HEK293 (cell line): ENCODE measurements at regions of chr12 and their contacts with region 1.

Region 1: DNA sequence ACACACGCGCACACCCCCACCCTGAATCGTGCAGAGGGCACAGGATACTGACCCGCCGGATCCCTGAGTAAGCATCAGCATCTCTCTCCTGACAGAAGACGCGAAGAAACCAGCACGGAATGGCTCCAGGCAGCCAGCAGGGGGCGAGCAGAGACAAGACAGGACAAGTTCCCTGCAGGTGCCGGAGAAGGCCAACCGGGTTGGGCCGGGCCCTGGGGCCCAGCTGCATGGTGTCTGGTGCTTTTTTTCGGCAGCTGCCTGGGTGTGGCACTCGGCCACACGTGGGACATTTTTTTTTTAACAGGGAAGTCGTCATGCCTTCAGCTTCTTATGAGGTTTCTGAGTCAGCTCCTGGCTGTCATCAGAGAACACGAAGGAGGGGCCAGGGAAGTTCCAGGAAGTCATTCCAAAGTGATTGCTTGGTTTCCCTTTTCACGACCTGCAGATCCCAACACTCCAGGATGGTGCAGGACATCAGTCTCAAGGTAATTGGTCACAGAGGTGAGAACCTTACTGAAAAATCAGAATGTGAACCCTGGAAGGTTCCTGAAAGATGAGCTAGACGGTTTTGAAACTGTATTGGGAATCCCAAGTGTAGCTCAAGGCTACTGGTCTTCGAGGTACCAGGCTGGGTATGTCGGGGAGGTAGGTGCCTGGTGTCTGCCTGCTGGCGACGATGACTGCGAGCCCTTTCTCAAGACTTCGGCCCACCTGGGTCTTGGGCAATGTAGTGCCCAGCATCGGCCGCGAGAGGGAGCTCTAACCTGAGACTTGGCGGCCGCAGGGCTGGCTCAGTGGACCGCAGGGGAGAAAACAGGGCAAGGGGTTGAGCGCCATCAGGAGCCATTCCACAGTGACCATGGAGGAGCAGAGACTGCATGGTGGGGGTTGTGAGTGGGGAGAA is 190.8 kb upstream of the PRMT8 start:
- H3K4me3 ChIP-seq: no peak overlapping the region
- H3K27ac ChIP-seq: peak overlapping the region; percentile 27; the same call in 1 of the 2 replicates
- H3K4me1 ChIP-seq: no peaks in the 10 kb centered on the region; the same call in 1 of the 2 replicates
- CTCF ChIP-seq: peak; percentile 90

Region 2: GRCh38 chr12:3097186-3097804 is 202.9 kb before region 1 on chr12:
- CTCF ChIA-PET with region 1: no interaction called
- POLR2A ChIA-PET with region 1: no interaction called
- H3K4me3 ChIP-seq: no peak overlapping the region
- H3K27ac ChIP-seq: no peak overlapping the region
- H3K4me1 ChIP-seq: peaks cover 4% of the 10 kb centered on the region
- CTCF ChIP-seq: no peak

Region 3: GRCh38 chr12:3275171-3276041 is 24.8 kb before region 1 on chr12:
- CTCF ChIA-PET with region 1: interaction called, 12 read pairs
- POLR2A ChIA-PET with region 1: no interaction called
- H3K4me3 ChIP-seq: no peak overlapping the region
- H3K27ac ChIP-seq: no peak overlapping the region
- H3K4me1 ChIP-seq: no peaks in the 10 kb centered on the region
- CTCF ChIP-seq: peak; percentile 86

Region 4: DNA sequence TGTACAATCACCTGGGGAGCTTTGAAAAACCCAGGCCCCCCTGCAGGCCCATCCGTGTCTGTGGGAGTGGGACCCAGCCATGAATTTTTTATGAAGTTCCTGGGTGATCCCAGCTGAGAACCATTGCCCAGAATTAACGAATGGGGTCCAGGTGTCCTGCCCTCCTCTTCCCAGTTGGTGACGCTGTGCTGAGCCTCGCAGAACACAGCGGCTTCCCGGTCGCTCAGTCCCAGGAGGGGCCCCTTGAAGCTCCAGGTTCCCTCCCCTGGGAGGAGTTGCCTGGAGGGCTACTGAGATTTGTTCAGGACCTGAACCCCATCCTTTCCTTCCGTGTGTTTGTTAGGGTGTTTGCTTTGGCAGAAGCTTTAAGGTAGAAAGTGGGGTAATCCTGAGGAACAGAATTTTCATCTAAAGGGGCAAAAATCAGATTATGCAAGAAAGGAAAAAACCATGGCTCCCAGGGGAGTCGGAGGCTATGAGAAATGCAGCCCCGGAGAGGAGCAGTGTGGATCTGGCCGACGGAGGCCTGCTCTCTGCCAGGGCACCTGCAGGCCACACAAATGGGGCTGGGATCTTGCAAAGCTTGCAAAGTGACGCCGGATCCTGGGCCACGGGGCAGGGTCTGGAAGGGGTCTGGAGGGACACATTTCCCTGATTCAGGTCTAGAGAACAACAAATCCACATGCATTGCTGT is 26.1 kb after region 1 on chr12:
- CTCF ChIA-PET with region 1: interaction called, 10 read pairs
- POLR2A ChIA-PET with region 1: no interaction called
- H3K4me3 ChIP-seq: no peak overlapping the region
- H3K27ac ChIP-seq: no peak overlapping the region
- H3K4me1 ChIP-seq: no peaks in the 10 kb centered on the region
- CTCF ChIP-seq: no peak

Region 5: GRCh38 chr12:3418609-3419390 is 118.6 kb after region 1 on chr12:
- CTCF ChIA-PET with region 1: interaction called, 14 read pairs
- POLR2A ChIA-PET with region 1: no interaction called
- H3K4me3 ChIP-seq: no peak overlapping the region
- H3K27ac ChIP-seq: no peak overlapping the region
- H3K4me1 ChIP-seq: no peaks in the 10 kb centered on the region
- CTCF ChIP-seq: no peak

Region 6: DNA sequence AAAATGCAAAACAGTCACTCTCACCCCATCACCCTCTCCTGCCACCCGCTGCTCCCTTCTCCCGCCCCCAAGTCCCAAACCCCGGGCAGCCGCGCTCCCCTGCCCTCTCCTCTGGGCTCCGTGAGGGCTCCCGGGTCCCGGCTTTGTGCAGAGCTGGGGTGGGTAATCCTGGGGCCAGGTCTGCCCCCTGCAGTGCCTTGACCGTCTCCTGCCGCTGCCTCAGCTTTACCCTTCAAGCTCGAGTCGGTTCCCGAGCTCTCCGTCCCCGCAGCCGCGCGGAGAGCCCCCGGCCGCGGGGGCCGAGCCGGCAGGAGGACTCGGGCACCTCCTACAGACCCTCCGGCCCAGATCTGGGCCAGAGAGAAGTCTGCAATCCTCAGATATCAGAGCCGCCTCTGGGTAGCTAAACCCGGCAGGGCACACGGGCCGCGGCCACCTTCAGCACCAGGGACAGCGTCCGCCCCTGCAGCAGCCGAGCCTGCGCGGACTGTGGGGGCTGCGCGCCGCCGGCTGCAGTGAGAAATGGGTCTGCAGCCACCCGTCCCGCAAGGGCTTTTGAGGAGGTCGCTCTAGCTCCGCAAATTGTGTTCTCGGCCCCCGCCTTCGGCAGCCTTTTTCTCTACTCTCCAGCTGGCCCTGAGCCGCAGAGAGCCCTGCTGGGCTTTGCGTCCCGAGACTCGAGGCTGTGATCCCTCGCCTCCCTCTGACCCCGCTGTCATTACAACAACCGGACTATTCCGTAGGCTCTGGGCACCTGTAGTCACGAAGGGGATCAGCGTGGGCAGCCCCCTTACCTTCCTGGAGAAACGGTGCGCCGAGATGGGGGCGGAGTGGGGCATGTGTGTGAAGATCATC is 192.0 kb after region 1 on chr12:
- CTCF ChIA-PET with region 1: interaction called, 10 read pairs
- POLR2A ChIA-PET with region 1: no interaction called
- H3K4me3 ChIP-seq: peak overlapping the region; percentile 18
- H3K27ac ChIP-seq: no peak overlapping the region
- H3K4me1 ChIP-seq: peaks cover 11% of the 10 kb centered on the region
- CTCF ChIP-seq: no peak

Region 7: GRCh38 chr12:3770886-3771285 is 470.7 kb after region 1 on chr12:
- CTCF ChIA-PET with region 1: interaction called, 51 read pairs
- POLR2A ChIA-PET with region 1: no interaction called
- H3K4me3 ChIP-seq: no peak overlapping the region
- H3K27ac ChIP-seq: no peak overlapping the region
- H3K4me1 ChIP-seq: no peaks in the 10 kb centered on the region
- CTCF ChIP-seq: no peak

Region 8: DNA sequence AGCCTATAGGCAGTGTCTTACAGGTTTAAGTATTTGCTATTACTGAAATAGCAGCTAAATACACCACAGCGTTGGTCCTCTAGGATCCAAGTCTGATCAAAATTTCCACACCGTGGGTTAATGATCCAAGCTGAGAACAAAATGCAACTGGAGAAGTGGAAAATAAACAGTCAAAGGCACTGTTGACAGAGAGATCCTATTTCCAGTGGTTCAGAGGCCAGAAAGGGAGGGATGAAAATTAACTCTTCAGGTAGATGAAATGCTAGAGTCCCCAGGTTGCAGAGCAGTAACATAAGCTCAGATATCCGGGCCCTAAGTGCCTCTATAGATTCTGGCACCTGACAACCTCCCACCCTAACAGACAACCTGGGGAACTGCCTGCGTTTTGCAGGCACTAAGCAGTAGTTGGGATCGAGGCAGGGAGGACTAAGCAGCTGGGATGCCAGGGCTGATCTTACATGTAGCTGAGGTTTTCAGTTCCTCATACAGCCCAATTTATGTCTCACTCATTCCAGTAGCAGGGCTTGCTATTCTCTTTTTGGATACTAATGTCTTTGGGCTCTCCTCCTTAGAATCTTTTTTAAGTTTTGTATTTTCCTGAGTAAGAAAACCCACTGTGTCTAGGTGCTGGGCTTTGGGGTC is 495.4 kb after region 1 on chr12:
- CTCF ChIA-PET with region 1: interaction called, 35 read pairs
- POLR2A ChIA-PET with region 1: no interaction called
- H3K4me3 ChIP-seq: no peak overlapping the region
- H3K27ac ChIP-seq: no peak overlapping the region
- H3K4me1 ChIP-seq: no peaks in the 10 kb centered on the region
- CTCF ChIP-seq: no peak